Prostate gland (tissue), 2 donors: ENCODE measurements at regions of chr1 and their contacts with region 1.

Region 1: DNA sequence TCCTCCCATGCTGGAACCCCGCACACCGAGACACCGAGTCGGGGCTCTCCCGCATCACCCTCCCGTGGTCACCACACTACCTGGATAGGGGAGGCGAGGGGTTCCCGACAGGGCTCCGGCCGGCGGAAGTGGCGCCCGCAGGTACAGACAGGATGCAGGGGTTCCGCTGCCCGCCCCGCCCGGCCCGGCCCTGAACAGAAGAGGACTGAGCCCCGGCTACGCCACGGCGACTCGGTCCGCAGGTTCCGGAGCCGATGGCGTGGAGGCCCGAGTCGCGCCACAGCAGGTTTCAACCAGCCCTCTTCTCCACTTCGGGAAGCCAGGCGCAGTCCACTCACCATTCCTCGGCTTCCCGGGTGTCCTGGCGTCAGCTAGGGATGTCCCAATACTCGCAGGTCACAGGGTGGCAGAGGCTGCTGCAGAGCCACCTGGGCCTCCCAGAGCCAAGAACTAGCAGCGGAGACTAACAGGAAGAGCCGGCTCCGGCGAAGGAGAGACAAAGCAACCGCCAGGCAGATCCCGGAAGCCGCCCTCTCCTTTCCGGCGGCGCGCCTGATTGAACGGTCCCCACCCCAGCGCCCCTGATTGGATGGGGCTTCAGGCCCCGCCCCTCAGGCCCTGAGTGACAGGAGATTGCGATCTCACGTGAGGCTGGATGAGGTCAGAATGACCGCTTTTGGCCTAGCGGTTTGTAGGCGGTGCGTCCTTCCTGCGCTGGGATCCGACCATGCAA is at the start of gene ZNF669:
- DNase-seq: peak; percentile 96
- H3K4me3 ChIP-seq: peak within 1 kb of the TSS; percentile 64 to 93
- H3K27ac ChIP-seq: peak within 1 kb of the TSS; percentile 79 to 83
- H3K4me1 ChIP-seq: no peaks in the 10 kb centered on the region
- H3K27me3 ChIP-seq: no peaks in the 10 kb centered on the region
- CTCF ChIP-seq: peak in 1 of 4 experiments; percentile 20
- POLR2A ChIP-seq: peak; percentile 73
- total RNA-seq, gene ZNF669: 7.0 to 8.2 TPM

Region 2: GRCh38 chr1:246931549-246932365 is 172.3 kb before region 1 on chr1 and contains the start of gene AHCTF1:
- intact Hi-C with region 1: loop called (anchors 10 kb)
- DNase-seq: peak; percentile 96
- H3K4me3 ChIP-seq: peak within 1 kb of the TSS; percentile 96 to 98
- H3K27ac ChIP-seq: peak within 1 kb of the TSS; percentile 92 to 97
- H3K4me1 ChIP-seq: peaks cover 3% of the 10 kb centered on the region
- H3K27me3 ChIP-seq: no peaks in the 10 kb centered on the region
- CTCF ChIP-seq: peak in 1 of 4 experiments; percentile 18
- POLR2A ChIP-seq: peak; percentile 98
- total RNA-seq, gene AHCTF1: 22.5 to 39.6 TPM

Region 3: GRCh38 chr1:247210376-247211117 is 106.5 kb after region 1 on chr1:
- intact Hi-C with region 1: loop called (anchors 10 kb)
- DNase-seq: peak; percentile 98
- H3K4me3 ChIP-seq: peak overlapping the region; percentile 80 to 82
- H3K27ac ChIP-seq: peak overlapping the region; percentile 59 to 78
- H3K4me1 ChIP-seq: no peaks in the 10 kb centered on the region
- H3K27me3 ChIP-seq: no peaks in the 10 kb centered on the region
- CTCF ChIP-seq: no peak
- POLR2A ChIP-seq: peak; percentile 78

Region 4: DNA sequence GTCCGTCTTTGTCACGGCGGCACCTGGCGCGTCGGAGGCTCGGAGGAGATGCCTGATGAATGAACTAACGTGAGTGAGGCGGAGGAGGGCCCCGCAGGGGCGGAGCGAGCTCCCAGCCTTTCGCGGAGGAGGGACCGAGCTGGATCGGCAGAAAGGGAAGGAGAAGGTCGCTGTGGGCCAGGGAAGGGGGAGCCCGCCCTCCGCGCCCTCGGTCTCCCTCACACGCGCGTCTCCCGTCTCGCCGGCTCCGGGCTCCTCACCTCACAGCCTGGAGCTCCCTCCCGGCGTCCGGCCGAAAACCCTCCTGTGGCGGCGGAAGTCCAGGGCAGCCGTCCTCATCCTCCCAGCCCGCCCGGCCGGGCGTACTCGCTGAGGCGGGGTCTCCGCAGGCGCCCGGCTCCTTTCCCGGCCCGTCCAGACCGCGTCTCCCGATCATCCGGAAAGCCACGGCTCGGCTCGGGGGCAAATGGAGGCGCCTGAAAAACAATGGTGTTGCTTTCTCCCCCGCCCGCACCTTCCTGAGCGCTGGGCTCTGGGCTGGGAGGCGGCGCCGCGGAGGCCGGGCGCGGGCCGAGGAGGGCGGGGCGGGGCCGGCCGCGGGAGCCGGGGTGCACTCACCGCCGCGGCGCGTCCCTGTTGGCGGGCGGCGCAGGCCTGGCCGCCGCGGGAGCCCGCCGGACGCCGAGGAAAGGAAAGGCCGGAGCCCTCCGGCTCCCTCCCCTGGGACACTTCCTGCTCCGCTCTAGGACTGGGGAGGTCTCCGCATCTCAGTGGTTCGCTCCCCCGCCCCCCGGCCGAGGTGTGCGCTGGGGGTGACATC is 227.4 kb after region 1 on chr1 and contains the start of gene ZNF496:
- intact Hi-C with region 1: loop called (anchors 10 kb)
- DNase-seq: peak; percentile 81
- H3K4me3 ChIP-seq: peak within 1 kb of the TSS; percentile 86 to 91
- H3K27ac ChIP-seq: peak within 1 kb of the TSS; percentile 83 to 89
- H3K4me1 ChIP-seq: peaks cover 7% of the 10 kb centered on the region
- H3K27me3 ChIP-seq: no peaks in the 10 kb centered on the region
- CTCF ChIP-seq: no peak
- POLR2A ChIP-seq: peak; percentile 78
- total RNA-seq, gene ZNF496: 32.1 to 68.2 TPM